ENCODE measurements at regions of chr14 and their contacts with region 1.

Region 1: GRCh38 chr14:64914237-64914971 is at the start of gene CHURC1:
- DNase-seq: peak; percentile 88 to 100
- ATAC-seq: peak; percentile 81 to 90 (median 82)
- H3K4me3 ChIP-seq: peak within 1 kb of the TSS; percentile 65
- H3K4me3 Mint-ChIP-seq: peak within 1 kb of the TSS; percentile 96
- H3K27ac ChIP-seq: peak within 1 kb of the TSS; percentile 95
- H3K27ac Mint-ChIP-seq: peak within 1 kb of the TSS; percentile 97 to 98
- H3K4me1 ChIP-seq: peaks cover 14% of the 10 kb centered on the region
- H3K4me1 Mint-ChIP-seq: peaks cover 41 to 50% of the 10 kb centered on the region in 2 donors
- H3K27me3 ChIP-seq: no peaks in the 10 kb centered on the region
- H3K27me3 Mint-ChIP-seq: peaks cover 0 to 3% of the 10 kb centered on the region in 2 donors
- CTCF ChIP-seq: no peak
- total RNA-seq, gene CHURC1: 56.1 to 65.5 (median 65.4) TPM

Region 2: GRCh38 chr14:64170181-64170580 is 744.2 kb before region 1 on chr14:
- intact Hi-C with region 1: no loop called
- DNase-seq: no peak
- ATAC-seq: no peak
- H3K4me3 ChIP-seq: no peak overlapping the region
- H3K4me3 Mint-ChIP-seq: no peak overlapping the region
- H3K27ac ChIP-seq: no peak overlapping the region
- H3K27ac Mint-ChIP-seq: peak overlapping the region in 1 of 2 donors; percentile 31
- H3K4me1 ChIP-seq: no peaks in the 10 kb centered on the region
- H3K4me1 Mint-ChIP-seq: no peaks in the 10 kb centered on the region
- H3K27me3 ChIP-seq: no peaks in the 10 kb centered on the region
- H3K27me3 Mint-ChIP-seq: no peaks in the 10 kb centered on the region
- CTCF ChIP-seq: no peak

Region 3: GRCh38 chr14:64772393-64772950 is 141.9 kb before region 1 on chr14:
- intact Hi-C with region 1: no loop called
- DNase-seq: no peak
- ATAC-seq: no peak
- H3K4me3 ChIP-seq: no peak overlapping the region
- H3K4me3 Mint-ChIP-seq: no peak overlapping the region
- H3K27ac ChIP-seq: no peak overlapping the region
- H3K27ac Mint-ChIP-seq: no peak overlapping the region
- H3K4me1 ChIP-seq: no peaks in the 10 kb centered on the region
- H3K4me1 Mint-ChIP-seq: no peaks in the 10 kb centered on the region
- H3K27me3 ChIP-seq: no peaks in the 10 kb centered on the region
- H3K27me3 Mint-ChIP-seq: no peaks in the 10 kb centered on the region
- CTCF ChIP-seq: no peak

Region 4: DNA sequence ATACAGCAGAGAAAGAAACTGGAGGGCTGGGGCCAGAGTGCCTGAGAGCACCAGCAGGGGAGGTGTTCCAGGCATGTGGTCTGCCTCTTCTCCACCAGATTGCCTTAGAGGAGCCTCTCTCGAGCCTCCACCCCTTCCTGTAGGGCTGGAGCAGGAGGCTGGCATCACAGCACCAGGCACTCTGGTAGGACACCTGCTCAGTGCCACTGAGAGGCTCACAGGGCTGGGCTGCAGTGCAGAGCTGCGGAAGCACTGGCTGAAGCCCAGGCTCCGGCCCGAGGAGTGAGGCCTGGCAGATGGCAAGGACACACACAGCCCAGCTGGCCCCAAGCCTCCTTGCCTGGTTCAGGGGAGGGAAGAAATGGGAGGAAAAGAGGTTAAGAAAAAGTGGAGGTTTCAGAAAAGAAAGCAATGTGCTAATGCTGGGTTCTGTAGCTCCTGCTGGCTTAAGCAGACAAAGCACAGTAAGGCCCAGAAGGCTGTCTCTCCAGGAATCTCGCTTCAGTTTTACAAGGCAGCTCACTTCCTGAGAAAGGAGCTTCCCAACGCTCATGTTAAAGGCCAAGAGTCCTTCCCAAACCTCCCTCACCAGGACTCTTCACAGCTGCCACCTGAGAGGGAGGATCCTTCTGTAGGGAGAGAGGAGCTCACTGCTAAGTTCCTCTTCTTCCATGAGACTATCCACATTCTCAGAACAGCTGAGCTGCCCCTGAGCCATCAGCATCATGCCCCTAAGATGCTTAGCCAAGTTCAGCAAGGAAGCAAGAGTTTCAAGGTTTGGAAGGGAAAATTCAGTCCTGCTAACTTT is 58.5 kb before region 1 on chr14:
- intact Hi-C with region 1: no loop called
- DNase-seq: no peak
- ATAC-seq: no peak
- H3K4me3 ChIP-seq: no peak overlapping the region
- H3K4me3 Mint-ChIP-seq: no peak overlapping the region
- H3K27ac ChIP-seq: no peak overlapping the region
- H3K27ac Mint-ChIP-seq: no peak overlapping the region
- H3K4me1 ChIP-seq: no peaks in the 10 kb centered on the region
- H3K4me1 Mint-ChIP-seq: no peaks in the 10 kb centered on the region
- H3K27me3 ChIP-seq: no peaks in the 10 kb centered on the region
- H3K27me3 Mint-ChIP-seq: peaks cover 13 to 17% of the 10 kb centered on the region in 2 donors
- CTCF ChIP-seq: no peak

Region 5: GRCh38 chr14:64928239-64929013 is 14.0 kb after region 1 on chr14:
- intact Hi-C with region 1: loop called (anchors 2 kb)
- DNase-seq: peak in 1 of 2 donors; percentile 64
- ATAC-seq: peak; percentile 80 to 85 (median 83)
- H3K4me3 ChIP-seq: no peak overlapping the region
- H3K4me3 Mint-ChIP-seq: no peak overlapping the region
- H3K27ac ChIP-seq: peak overlapping the region; percentile 83
- H3K27ac Mint-ChIP-seq: no peak overlapping the region
- H3K4me1 ChIP-seq: peaks cover 17% of the 10 kb centered on the region
- H3K4me1 Mint-ChIP-seq: peaks cover 6 to 14% of the 10 kb centered on the region in 2 donors
- H3K27me3 ChIP-seq: no peaks in the 10 kb centered on the region
- H3K27me3 Mint-ChIP-seq: no peaks in the 10 kb centered on the region
- CTCF ChIP-seq: no peak

Region 6: GRCh38 chr14:64942531-64943111 is 28.2 kb after region 1 on chr14 and contains the start of gene GPX2:
- intact Hi-C with region 1: no loop called
- DNase-seq: no peak
- ATAC-seq: no peak
- H3K4me3 ChIP-seq: no peak within 1 kb of the TSS
- H3K4me3 Mint-ChIP-seq: peak within 1 kb of the TSS; percentile 25
- H3K27ac ChIP-seq: no peak within 1 kb of the TSS
- H3K27ac Mint-ChIP-seq: peak within 1 kb of the TSS; percentile 23 to 74
- H3K4me1 ChIP-seq: peaks cover 14% of the 10 kb centered on the region
- H3K4me1 Mint-ChIP-seq: peaks cover 36 to 65% of the 10 kb centered on the region in 2 donors
- H3K27me3 ChIP-seq: no peaks in the 10 kb centered on the region
- H3K27me3 Mint-ChIP-seq: no peaks in the 10 kb centered on the region
- CTCF ChIP-seq: no peak
- total RNA-seq, gene GPX2: not detected

Region 7: GRCh38 chr14:65102441-65103149 is 188.2 kb after region 1 on chr14 and contains the start of gene MAX:
- intact Hi-C with region 1: loop called (anchors 5 kb)
- DNase-seq: peak; percentile 94 to 98
- ATAC-seq: peak; percentile 85 to 97 (median 91)
- H3K4me3 ChIP-seq: peak within 1 kb of the TSS; percentile 76
- H3K4me3 Mint-ChIP-seq: peak within 1 kb of the TSS; percentile 96
- H3K27ac ChIP-seq: peak within 1 kb of the TSS; percentile 94
- H3K27ac Mint-ChIP-seq: peak within 1 kb of the TSS; percentile 94 to 95
- H3K4me1 ChIP-seq: peaks cover 19% of the 10 kb centered on the region
- H3K4me1 Mint-ChIP-seq: peaks cover 37 to 47% of the 10 kb centered on the region in 2 donors
- H3K27me3 ChIP-seq: peaks cover 7% of the 10 kb centered on the region
- H3K27me3 Mint-ChIP-seq: peaks cover 0 to 4% of the 10 kb centered on the region in 2 donors
- CTCF ChIP-seq: no peak
- total RNA-seq, gene MAX: 162 to 208 (median 191) TPM

Measured in natural killer cell (primary cell).